Activated CD4-positive, alpha-beta memory T cell treated with anti-CD3 and anti-CD28 coated beads, Interleukin-2, amount 10 ng/mL, durations not matched to agents 7 days and 5 days (primary cell): ENCODE measurements at regions of chr3 and their contacts with region 1.

Region 1: DNA sequence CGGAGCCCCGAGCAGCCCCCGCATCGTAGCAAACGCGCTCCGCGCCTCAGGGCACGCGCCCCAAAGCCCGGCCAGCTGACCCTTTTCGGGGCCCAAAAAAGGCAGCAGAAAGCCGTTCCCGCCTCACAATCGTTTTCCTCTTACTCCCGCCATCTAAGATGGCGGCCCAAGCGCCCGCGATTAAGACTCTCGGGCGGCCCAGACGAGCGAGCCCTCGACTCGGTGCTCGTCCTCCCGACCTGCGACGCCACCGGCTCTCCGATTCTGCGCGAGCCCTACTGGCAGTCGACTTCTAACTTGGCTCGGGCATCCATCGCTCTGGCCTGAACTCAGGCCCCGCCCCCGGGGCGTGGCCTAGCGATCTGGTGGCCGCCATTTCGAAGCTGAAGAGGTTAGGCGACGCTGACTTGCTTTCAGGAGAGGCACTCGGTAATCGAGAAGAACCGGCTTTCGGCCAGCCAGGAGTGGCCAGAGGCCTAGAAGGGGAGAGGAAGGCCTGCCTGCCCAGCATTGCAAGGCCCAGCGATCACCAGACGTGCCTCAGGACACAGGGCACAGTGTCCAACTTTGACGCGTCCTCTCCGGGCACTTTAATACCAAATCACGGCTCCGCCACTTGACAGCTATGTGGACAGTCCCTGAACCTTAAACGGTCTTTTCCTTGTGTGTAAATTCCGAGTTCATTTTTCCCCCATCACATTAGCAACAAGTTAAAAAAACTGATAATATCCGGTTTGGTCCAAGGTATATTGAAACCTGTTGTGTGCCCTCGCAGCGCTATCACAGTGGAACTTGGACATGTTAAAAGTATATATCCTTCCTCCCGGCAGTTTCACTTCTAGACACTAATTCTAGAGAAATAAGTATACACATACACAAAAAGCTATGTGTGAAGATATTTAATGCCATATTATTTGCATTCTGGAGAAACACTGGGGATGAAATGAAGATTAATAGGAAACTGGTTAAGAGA is at the start of gene RAF1:
- DNase-seq: peak; percentile 98
- H3K4me3 Mint-ChIP-seq: peak within 1 kb of the TSS; percentile 83
- H3K27ac Mint-ChIP-seq: peak within 1 kb of the TSS; percentile 99
- H3K4me1 Mint-ChIP-seq: peaks cover 28% of the 10 kb centered on the region
- H3K27me3 Mint-ChIP-seq: no peaks in the 10 kb centered on the region
- total RNA-seq, gene RAF1: 83.2 to 86.0 TPM

Region 2: GRCh38 chr3:12436514-12437220 is 227.6 kb before region 1 on chr3:
- CTCF ChIA-PET with region 1: no interaction called
- POLR2A ChIA-PET with region 1: no interaction called
- DNase-seq: no peak
- H3K4me3 Mint-ChIP-seq: no peak overlapping the region
- H3K27ac Mint-ChIP-seq: no peak overlapping the region
- H3K4me1 Mint-ChIP-seq: no peaks in the 10 kb centered on the region
- H3K27me3 Mint-ChIP-seq: peaks cover 6% of the 10 kb centered on the region

Region 3: GRCh38 chr3:12556671-12557472 is 107.3 kb before region 1 on chr3 and contains the start of gene MKRN2:
- CTCF ChIA-PET with region 1: interaction called, 3 read pairs
- POLR2A ChIA-PET with region 1: interaction called, 21 read pairs
- DNase-seq: peak; percentile 88
- H3K4me3 Mint-ChIP-seq: peak within 1 kb of the TSS; percentile 98
- H3K27ac Mint-ChIP-seq: peak within 1 kb of the TSS; percentile 88
- H3K4me1 Mint-ChIP-seq: peaks cover 58% of the 10 kb centered on the region
- H3K27me3 Mint-ChIP-seq: peaks cover 19% of the 10 kb centered on the region
- total RNA-seq, gene MKRN2: 21.9 to 24.2 TPM

Region 4: GRCh38 chr3:12608376-12608775 is 55.8 kb before region 1 on chr3:
- CTCF ChIA-PET with region 1: interaction called, 3 read pairs
- POLR2A ChIA-PET with region 1: interaction called, 14 read pairs
- DNase-seq: no peak
- H3K4me3 Mint-ChIP-seq: no peak overlapping the region
- H3K27ac Mint-ChIP-seq: no peak overlapping the region
- H3K4me1 Mint-ChIP-seq: peaks cover 23% of the 10 kb centered on the region
- H3K27me3 Mint-ChIP-seq: no peaks in the 10 kb centered on the region

Region 5: GRCh38 chr3:12653747-12654146 is 10.5 kb before region 1 on chr3:
- CTCF ChIA-PET with region 1: interaction called, 3 read pairs
- POLR2A ChIA-PET with region 1: interaction called, 14 read pairs
- DNase-seq: no peak
- H3K4me3 Mint-ChIP-seq: no peak overlapping the region
- H3K27ac Mint-ChIP-seq: no peak overlapping the region
- H3K4me1 Mint-ChIP-seq: peaks cover 22% of the 10 kb centered on the region
- H3K27me3 Mint-ChIP-seq: no peaks in the 10 kb centered on the region

Region 6: GRCh38 chr3:12677580-12677979 is 13.4 kb after region 1 on chr3:
- CTCF ChIA-PET with region 1: no interaction called
- POLR2A ChIA-PET with region 1: interaction called, 10 read pairs
- DNase-seq: no peak
- H3K4me3 Mint-ChIP-seq: no peak overlapping the region
- H3K27ac Mint-ChIP-seq: no peak overlapping the region
- H3K4me1 Mint-ChIP-seq: peaks cover 5% of the 10 kb centered on the region
- H3K27me3 Mint-ChIP-seq: no peaks in the 10 kb centered on the region